Activated CD4-positive, alpha-beta memory T cell treated with anti-CD3 and anti-CD28 coated beads for 36 hours (primary cell): ENCODE measurements at regions of chr10 and their contacts with region 1.

Region 1: DNA sequence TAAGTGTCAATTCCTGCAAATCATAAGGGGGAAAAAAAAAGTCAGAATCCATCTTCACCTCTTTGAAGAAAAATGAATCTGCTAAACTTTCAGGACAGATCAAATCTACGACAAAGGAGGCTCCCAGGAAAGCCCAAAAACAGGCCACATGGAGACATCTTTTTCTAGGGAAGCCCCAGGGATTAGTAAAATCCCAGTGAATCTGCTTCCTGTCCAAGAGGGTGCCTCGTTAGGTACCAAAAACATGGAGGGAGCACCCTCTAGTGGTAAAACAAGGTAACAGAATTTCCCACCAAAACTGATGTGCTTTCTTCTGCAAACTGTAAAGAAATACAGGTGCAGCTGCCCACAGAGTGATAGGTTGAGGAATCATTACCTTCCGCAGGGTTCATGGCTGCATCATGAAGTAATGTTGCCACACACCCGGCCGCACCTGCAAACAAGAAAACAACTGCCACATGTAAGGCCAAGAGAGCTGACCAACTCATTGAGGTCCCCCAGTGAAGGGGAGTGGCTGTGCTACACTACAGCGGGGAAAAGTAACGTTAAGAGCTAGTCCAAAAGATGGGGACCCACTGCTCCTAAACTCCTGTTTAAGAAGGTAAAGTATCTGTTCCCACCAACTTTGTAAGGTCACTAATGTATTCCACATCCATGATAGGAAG is 7.9 kb downstream of the SLC25A28 start:
- DNase-seq: no peak
- H3K4me3 Mint-ChIP-seq: no peak overlapping the region
- H3K27ac Mint-ChIP-seq: peak overlapping the region; percentile 70
- H3K4me1 Mint-ChIP-seq: peaks cover 42% of the 10 kb centered on the region
- H3K27me3 Mint-ChIP-seq: no peaks in the 10 kb centered on the region

Region 2: GRCh38 chr10:99395750-99396445 is 216.4 kb before region 1 on chr10:
- CTCF ChIA-PET with region 1: interaction called, 9 read pairs
- POLR2A ChIA-PET with region 1: no interaction called
- intact Hi-C with region 1: loop called (anchors 1 kb)
- DNase-seq: no peak
- H3K4me3 Mint-ChIP-seq: no peak overlapping the region
- H3K27ac Mint-ChIP-seq: no peak overlapping the region
- H3K4me1 Mint-ChIP-seq: peaks cover 2% of the 10 kb centered on the region
- H3K27me3 Mint-ChIP-seq: no peaks in the 10 kb centered on the region

Region 3: DNA sequence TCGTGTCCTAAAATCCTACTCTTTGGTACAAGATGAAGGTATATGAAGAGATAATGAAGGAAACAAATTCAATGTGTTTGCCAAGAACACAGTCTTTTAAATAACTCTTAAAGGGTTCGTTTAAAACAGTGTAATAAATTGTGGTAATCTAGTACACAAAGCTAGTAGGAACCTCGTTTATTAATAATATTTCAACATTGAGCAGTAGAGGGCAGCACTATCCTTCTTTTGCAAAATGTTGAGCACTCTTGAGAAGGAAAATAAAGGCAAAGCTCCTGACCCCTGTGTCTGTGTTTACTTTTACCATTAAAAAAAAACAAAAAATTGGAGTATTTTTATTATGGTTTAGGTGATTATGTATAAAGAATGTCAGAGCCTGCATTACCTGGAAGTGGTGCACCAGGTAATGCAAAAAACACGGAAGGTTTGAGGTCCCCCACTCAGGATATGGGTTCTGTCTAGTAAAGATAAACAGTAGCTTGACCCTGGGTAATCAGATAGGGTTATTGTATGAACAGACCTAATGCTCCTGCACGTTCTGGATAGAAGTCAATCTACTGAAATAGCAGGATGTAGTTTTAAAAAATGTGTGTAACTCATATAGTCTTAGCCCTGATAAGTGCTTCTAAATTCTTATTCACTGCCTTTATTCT is 176.2 kb before region 1 on chr10:
- CTCF ChIA-PET with region 1: interaction called, 106 read pairs
- POLR2A ChIA-PET with region 1: interaction called, 7 read pairs
- intact Hi-C with region 1: no loop called
- DNase-seq: no peak
- H3K4me3 Mint-ChIP-seq: no peak overlapping the region
- H3K27ac Mint-ChIP-seq: no peak overlapping the region
- H3K4me1 Mint-ChIP-seq: peaks cover 18% of the 10 kb centered on the region
- H3K27me3 Mint-ChIP-seq: no peaks in the 10 kb centered on the region

Region 4: GRCh38 chr10:99560277-99561126 is 51.8 kb before region 1 on chr10:
- CTCF ChIA-PET with region 1: interaction called, 97 read pairs
- POLR2A ChIA-PET with region 1: interaction called, 4 read pairs
- intact Hi-C with region 1: loop called (anchors 1 kb)
- DNase-seq: peak; percentile 45
- H3K4me3 Mint-ChIP-seq: no peak overlapping the region
- H3K27ac Mint-ChIP-seq: no peak overlapping the region
- H3K4me1 Mint-ChIP-seq: peaks cover 9% of the 10 kb centered on the region
- H3K27me3 Mint-ChIP-seq: peaks cover 16% of the 10 kb centered on the region

Region 5: GRCh38 chr10:99685597-99685967 is 73.3 kb after region 1 on chr10:
- CTCF ChIA-PET with region 1: no interaction called
- POLR2A ChIA-PET with region 1: no interaction called
- intact Hi-C with region 1: no loop called
- DNase-seq: no peak
- H3K4me3 Mint-ChIP-seq: no peak overlapping the region
- H3K27ac Mint-ChIP-seq: no peak overlapping the region
- H3K4me1 Mint-ChIP-seq: no peaks in the 10 kb centered on the region
- H3K27me3 Mint-ChIP-seq: no peaks in the 10 kb centered on the region